PC-3 (cell line): ENCODE measurements at regions of chr3 and their contacts with region 1.

Region 1: GRCh38 chr3:186413615-186414415 is 51.8 kb upstream of the DGKG start:
- DNase-seq: peak; percentile 73
- ATAC-seq: peak; percentile 34
- H3K4me3 ChIP-seq: peak overlapping the region; percentile 65
- H3K27ac ChIP-seq: peak overlapping the region; percentile 92
- H3K4me1 ChIP-seq: peaks cover 67% of the 10 kb centered on the region
- H3K27me3 ChIP-seq: no peaks in the 10 kb centered on the region
- CTCF ChIP-seq: no peak

Region 2: DNA sequence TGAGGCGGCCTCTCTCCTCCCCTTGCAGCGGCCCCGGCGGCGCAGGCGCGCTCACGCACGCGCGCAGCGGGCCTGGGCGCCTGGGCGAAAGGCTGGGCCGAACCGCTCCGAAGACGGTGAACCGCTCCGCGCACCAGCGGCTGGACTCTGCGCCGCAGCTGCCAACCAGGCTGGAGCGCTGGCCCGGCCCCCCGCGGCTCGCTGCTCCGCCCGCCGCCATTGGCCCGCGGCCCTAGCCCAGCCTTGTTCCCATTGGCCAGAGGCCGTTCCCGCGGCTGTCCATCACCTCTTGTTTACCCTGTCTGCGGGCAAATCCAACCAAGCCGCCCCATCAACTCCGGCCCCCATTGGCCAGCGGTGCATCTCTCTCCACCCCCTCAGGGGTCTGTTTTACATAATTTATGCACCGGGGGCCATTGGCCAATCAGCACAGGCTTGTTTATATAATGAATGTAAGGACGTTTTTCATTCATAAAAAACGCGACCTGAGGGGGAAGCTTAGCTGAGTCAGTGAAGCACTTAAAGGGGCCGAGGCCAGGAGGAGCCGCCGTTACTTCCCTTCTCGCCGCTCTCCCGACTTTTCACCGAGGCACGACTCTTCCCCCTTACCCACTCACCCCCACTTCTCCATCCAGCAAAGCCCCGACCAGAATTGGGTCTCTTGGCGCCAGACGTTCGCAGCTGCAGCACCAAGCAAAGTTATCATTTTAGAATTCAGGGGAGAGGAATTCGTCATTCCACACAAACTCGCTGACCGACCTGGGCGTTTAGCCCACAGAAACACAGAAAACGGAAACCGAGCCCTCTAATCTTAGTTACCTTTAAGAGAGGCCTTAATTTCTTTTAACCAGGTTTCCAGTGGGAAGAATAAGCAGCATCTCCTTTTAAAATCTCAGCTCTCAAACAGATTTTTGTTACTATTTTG is 304.6 kb before region 1 on chr3 and contains the start of gene ETV5:
- CTCF ChIA-PET with region 1: no interaction called
- POLR2A ChIA-PET with region 1: no interaction called
- intact Hi-C with region 1: loop called (anchors 10 kb)
- DNase-seq: peak; percentile 99
- ATAC-seq: peak; percentile 90
- H3K4me3 ChIP-seq: peak within 1 kb of the TSS; percentile 96
- H3K27ac ChIP-seq: peak within 1 kb of the TSS; percentile 56
- H3K4me1 ChIP-seq: peaks cover 21% of the 10 kb centered on the region
- H3K27me3 ChIP-seq: no peaks in the 10 kb centered on the region
- CTCF ChIP-seq: no peak
- total RNA-seq, gene ETV5: 41.4 and 60.6 TPM in 2 replicates

Region 3: DNA sequence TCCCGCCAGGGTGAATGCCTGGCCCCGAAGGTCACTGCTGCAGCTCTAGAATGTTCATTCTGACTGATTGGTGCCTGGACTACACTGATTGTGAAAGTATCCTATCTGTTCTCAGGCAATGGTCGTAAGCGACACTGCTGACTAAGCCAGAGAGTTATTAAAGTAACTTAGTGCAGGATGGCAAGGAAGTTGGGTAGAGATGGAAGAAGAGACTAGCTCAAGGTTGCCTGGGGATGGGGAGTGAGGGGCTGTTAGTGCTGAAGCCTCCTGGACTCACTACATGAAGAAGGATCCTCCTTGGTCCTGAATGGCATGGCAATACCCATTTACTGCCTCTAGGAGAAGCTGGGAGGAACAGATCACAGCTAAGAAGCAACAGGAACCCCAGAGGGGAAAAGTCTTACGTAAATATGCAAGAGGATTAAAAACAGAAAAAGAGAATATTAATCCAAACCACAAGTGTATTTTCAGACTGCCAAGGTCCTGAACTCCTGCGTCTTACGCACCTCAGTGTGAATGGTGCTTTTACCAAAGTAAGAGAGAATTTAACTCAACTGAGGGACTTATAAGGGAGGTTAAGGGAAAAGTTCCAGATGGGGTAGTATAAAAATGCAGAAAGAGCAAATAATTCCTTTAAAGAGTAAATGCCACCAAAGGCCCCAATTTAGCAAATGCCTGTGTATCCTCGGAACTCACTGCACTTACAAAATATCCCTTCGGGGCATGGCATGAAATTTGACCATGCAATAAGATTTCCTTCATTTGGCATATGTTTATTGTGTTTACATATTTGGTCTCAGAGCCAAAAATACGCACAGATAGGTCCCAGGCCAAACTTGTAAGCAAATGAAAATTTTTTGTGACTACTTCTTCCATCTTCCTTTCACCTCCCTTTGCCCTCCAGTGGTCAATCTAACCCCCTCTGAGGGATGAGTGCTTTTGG is 12.2 kb after region 1 on chr3:
- CTCF ChIA-PET with region 1: no interaction called
- POLR2A ChIA-PET with region 1: no interaction called
- intact Hi-C with region 1: loop called (anchors 1 kb)
- DNase-seq: peak; percentile 81
- ATAC-seq: peak; percentile 89
- H3K4me3 ChIP-seq: no peak overlapping the region
- H3K27ac ChIP-seq: peak overlapping the region; percentile 60
- H3K4me1 ChIP-seq: peaks cover 30% of the 10 kb centered on the region
- H3K27me3 ChIP-seq: no peaks in the 10 kb centered on the region
- CTCF ChIP-seq: peak; percentile 62

Region 4: GRCh38 chr3:186439725-186440124 is 25.9 kb after region 1 on chr3:
- CTCF ChIA-PET with region 1: no interaction called
- POLR2A ChIA-PET with region 1: no interaction called
- intact Hi-C with region 1: no loop called
- DNase-seq: no peak
- ATAC-seq: no peak
- H3K4me3 ChIP-seq: no peak overlapping the region
- H3K27ac ChIP-seq: no peak overlapping the region
- H3K4me1 ChIP-seq: no peaks in the 10 kb centered on the region
- H3K27me3 ChIP-seq: no peaks in the 10 kb centered on the region
- CTCF ChIP-seq: no peak

Region 5: GRCh38 chr3:186464424-186465093 is 50.7 kb after region 1 on chr3:
- CTCF ChIA-PET with region 1: no interaction called
- POLR2A ChIA-PET with region 1: no interaction called
- intact Hi-C with region 1: loop called (anchors 2 kb)
- DNase-seq: peak; percentile 14
- ATAC-seq: no peak
- H3K4me3 ChIP-seq: no peak overlapping the region
- H3K27ac ChIP-seq: no peak overlapping the region
- H3K4me1 ChIP-seq: peaks cover 21% of the 10 kb centered on the region
- H3K27me3 ChIP-seq: no peaks in the 10 kb centered on the region
- CTCF ChIP-seq: peak; percentile 40

Region 6: GRCh38 chr3:186759231-186759930 is 345.6 kb after region 1 on chr3:
- CTCF ChIA-PET with region 1: no interaction called
- POLR2A ChIA-PET with region 1: no interaction called
- intact Hi-C with region 1: loop called (anchors 10 kb)
- DNase-seq: no peak
- ATAC-seq: no peak
- H3K4me3 ChIP-seq: no peak overlapping the region
- H3K27ac ChIP-seq: peak overlapping the region; percentile 59; the same call in 1 of the 2 replicates
- H3K4me1 ChIP-seq: peaks cover 7% of the 10 kb centered on the region; the same call in 1 of the 2 replicates
- H3K27me3 ChIP-seq: no peaks in the 10 kb centered on the region
- CTCF ChIP-seq: no peak